Mammary epithelial cell (primary cell): ENCODE measurements at regions of chr3 and their contacts with region 1.

Region 1: GRCh38 chr3:99246010-99246654 is 344.6 kb upstream of the DCBLD2 start:
- DNase-seq: peak; percentile 76
- H3K4me3 ChIP-seq: peak overlapping the region in 1 of 3 experiments; percentile 1
- H3K27ac ChIP-seq: peak overlapping the region; percentile 61
- H3K4me1 ChIP-seq: peaks cover 32% of the 10 kb centered on the region
- H3K27me3 ChIP-seq: no peaks in the 10 kb centered on the region
- CTCF ChIP-seq: no peak

Region 2: GRCh38 chr3:99199021-99199420 is 47.1 kb before region 1 on chr3:
- CTCF ChIA-PET with region 1: no interaction called
- dilution Hi-C with region 1: no loop called
- in situ Hi-C with region 1: no loop called
- intact Hi-C with region 1: no loop called
- DNase-seq: no peak
- H3K4me3 ChIP-seq: no peak overlapping the region
- H3K27ac ChIP-seq: no peak overlapping the region
- H3K4me1 ChIP-seq: no peaks in the 10 kb centered on the region
- H3K27me3 ChIP-seq: no peaks in the 10 kb centered on the region
- CTCF ChIP-seq: no peak

Region 3: DNA sequence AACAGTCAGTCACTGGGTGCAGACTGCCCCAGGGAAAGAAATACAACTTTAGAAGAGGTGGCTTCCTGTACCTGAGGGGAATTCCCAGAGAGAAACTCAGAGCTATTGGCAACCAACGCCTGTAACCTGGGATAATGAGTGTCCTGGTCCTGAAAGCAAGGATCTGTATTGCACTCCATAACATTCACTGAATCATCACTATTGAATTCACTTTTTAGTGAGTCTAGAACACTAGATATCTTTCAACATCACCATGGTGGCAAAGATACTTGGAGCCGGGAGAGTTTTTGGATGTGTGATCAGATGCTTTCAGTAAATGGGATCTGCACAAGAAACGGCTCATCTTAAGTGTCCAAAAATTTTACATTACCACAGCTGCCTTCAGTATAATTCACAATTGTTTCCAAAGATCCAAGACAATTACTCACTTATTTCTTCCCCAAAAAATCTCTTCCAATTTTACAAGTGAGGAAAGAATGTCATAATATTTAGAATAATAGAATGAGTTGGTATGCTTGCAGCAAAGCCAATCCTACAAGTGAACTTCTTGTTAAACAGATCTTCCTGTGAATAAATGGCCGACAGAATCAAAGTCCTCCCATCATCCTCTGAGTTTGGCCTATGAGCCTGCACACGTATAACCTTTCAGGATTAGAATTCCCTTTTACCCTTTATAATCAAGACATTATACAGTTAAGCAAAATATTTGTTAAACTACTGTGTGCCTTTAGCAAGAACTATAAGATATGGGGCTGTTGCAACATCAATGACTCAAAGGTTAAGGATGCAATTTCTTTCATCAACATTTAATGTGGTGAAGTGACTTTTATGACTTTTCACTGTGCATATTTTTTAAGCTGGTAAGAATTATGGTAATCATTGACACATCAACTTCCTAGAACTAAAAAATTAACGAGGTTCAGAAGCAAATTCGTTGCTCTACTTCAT is 149.0 kb after region 1 on chr3:
- CTCF ChIA-PET with region 1: interaction called, 9 read pairs
- dilution Hi-C with region 1: no loop called
- in situ Hi-C with region 1: no loop called
- intact Hi-C with region 1: loop called (anchors 5 kb)
- DNase-seq: peak; percentile 93
- H3K4me3 ChIP-seq: no peak overlapping the region
- H3K27ac ChIP-seq: peak overlapping the region; percentile 92
- H3K4me1 ChIP-seq: peaks cover 29% of the 10 kb centered on the region
- H3K27me3 ChIP-seq: no peaks in the 10 kb centered on the region
- CTCF ChIP-seq: no peak